GM12878 (cell line): ENCODE measurements at regions of chr12 and their contacts with region 1.

Region 1: DNA sequence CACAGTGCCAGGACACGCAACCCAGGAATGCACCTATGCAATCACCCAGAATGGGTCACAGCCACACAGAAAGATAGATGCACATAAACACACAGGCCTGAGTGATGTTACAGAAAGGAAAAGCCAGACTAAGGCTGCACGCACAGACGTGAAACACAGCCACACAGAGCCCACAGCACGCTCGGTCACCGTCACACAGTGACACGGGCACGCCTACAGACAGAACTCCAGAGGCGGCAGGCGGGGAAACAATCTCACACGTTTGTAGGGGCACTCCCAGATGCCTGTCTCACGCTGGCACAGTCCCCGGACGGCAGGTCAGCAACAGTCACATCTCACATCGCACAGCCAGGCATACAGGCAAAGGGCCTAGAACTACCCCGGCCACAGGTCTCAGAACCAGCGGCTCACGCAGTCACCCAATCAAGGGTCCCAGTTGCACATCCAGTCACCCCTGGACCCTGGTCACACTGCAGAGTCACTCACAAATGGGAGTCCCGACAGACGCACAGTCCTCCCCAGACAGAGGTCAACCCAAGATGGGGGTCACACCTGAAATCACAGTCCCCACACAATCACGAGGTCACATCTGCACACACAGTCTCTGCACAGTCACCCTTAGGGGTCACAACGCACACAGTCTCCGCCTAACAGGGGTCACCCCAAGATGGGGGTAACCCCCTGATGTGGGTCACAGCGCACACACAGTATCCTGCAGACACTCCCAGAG is 790 bp downstream of the SSH1 start:
- DNase-seq: no peak
- ATAC-seq: peak; percentile 37
- H3K4me3 ChIP-seq: peak overlapping the region; percentile 93
- H3K27ac ChIP-seq: peak overlapping the region; percentile 79
- H3K4me1 ChIP-seq: peaks cover 52% of the 10 kb centered on the region
- H3K27me3 ChIP-seq: no peaks in the 10 kb centered on the region
- CTCF ChIP-seq: peak in 1 of 3 experiments; percentile 5; a peak in 1 of 6 replicates
- EP300 ChIP-seq: peak; percentile 64 to 77; a peak in 3 of 4 replicates
- POLR2A ChIP-seq: no peak
- RAD21 ChIP-seq: no peak

Region 2: DNA sequence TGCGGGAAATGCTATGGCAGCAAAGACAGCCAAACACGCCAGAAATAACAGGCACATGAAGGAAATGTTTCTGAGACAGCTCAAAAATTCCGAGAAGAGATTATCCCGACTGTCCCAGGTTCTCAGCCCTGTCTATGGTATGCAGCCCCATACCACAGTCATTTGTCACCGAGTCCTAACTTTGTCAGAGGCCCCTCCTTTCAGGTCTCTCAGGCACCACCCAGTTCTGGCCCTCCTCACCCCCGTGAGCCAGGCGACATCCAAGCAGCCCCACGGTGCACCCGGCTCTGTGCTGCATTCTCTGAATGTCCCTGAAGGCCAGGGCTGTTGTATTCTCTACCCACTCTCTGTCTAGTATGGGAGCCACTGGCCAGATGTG is 23.2 kb before region 1 on chr12:
- CTCF ChIA-PET with region 1: interaction called, 26 read pairs
- POLR2A ChIA-PET with region 1: interaction called, 40 read pairs
- RAD21 ChIA-PET with region 1: interaction called, 34 read pairs
- SMC1A ChIA-PET with region 1: interaction called, 52 read pairs
- in situ Hi-C with region 1: no loop called
- intact Hi-C with region 1: loop called (anchors 2 kb)
- DNase-seq: no peak
- ATAC-seq: no peak
- H3K4me3 ChIP-seq: no peak overlapping the region
- H3K27ac ChIP-seq: no peak overlapping the region
- H3K4me1 ChIP-seq: peaks cover 34% of the 10 kb centered on the region
- H3K27me3 ChIP-seq: no peaks in the 10 kb centered on the region
- CTCF ChIP-seq: no peak
- EP300 ChIP-seq: no peak
- POLR2A ChIP-seq: no peak
- RAD21 ChIP-seq: no peak

Region 3: GRCh38 chr12:108838194-108839017 is 18.2 kb before region 1 on chr12:
- CTCF ChIA-PET with region 1: interaction called, 26 read pairs
- POLR2A ChIA-PET with region 1: interaction called, 40 read pairs
- RAD21 ChIA-PET with region 1: interaction called, 34 read pairs
- SMC1A ChIA-PET with region 1: interaction called, 44 read pairs
- in situ Hi-C with region 1: no loop called
- intact Hi-C with region 1: loop called (anchors 2 kb)
- DNase-seq: peak; percentile 91
- ATAC-seq: peak; percentile 98
- H3K4me3 ChIP-seq: no peak overlapping the region
- H3K27ac ChIP-seq: peak overlapping the region; percentile 90
- H3K4me1 ChIP-seq: peaks cover 21% of the 10 kb centered on the region
- H3K27me3 ChIP-seq: no peaks in the 10 kb centered on the region
- CTCF ChIP-seq: no peak
- EP300 ChIP-seq: peak; percentile 91 to 93
- POLR2A ChIP-seq: peak; percentile 59; the same call in 1 of the 2 replicates
- RAD21 ChIP-seq: no peak